IMR-90 (cell line): ENCODE measurements at regions of chr17 and their contacts with region 1.

Region 1: GRCh38 chr17:17280613-17281549 is at the start of gene COPS3:
- DNase-seq: peak; percentile 98
- ATAC-seq: peak; percentile 96
- H3K4me3 ChIP-seq: peak within 1 kb of the TSS; percentile 75
- H3K27ac ChIP-seq: peak within 1 kb of the TSS; percentile 85
- H3K4me1 ChIP-seq: peaks cover 4% of the 10 kb centered on the region
- H3K27me3 ChIP-seq: no peaks in the 10 kb centered on the region
- CTCF ChIP-seq: no peak
- POLR2A ChIP-seq: peak; percentile 82
- RAD21 ChIP-seq: 0 out of 2 replicates have a peak, but pooled peaks have one; percentile 2
- total RNA-seq, gene COPS3: 130 and 144 TPM in 2 replicates

Region 2: GRCh38 chr17:16954521-16954920 is 326.4 kb before region 1 on chr17:
- CTCF ChIA-PET with region 1: no interaction called
- POLR2A ChIA-PET with region 1: no interaction called
- dilution Hi-C with region 1: no loop called
- in situ Hi-C with region 1: no loop called
- intact Hi-C with region 1: no loop called
- DNase-seq: no peak
- ATAC-seq: no peak
- H3K4me3 ChIP-seq: no peak overlapping the region
- H3K27ac ChIP-seq: no peak overlapping the region
- H3K4me1 ChIP-seq: no peaks in the 10 kb centered on the region
- H3K27me3 ChIP-seq: peaks cover 32% of the 10 kb centered on the region
- CTCF ChIP-seq: no peak
- POLR2A ChIP-seq: no peak
- RAD21 ChIP-seq: no peak

Region 3: DNA sequence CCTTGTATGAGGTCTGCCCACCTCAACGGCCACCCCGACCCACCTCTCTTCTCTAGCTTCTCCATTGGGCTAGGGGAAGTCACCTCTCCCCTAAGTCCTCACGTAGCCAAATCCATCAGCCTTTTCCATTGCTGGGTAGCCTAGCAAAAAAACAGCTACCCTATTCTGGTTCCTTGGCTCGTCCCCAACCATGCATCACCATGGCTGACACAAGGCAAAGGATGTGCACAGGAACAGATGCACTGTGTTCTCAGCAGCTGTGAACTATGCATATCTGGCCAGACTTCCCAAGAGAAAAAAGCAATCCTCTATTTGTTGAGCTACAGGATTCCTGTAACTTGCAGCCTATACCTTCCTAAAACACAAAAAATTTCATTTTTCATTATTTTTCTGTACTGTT is 21.9 kb before region 1 on chr17:
- CTCF ChIA-PET with region 1: no interaction called
- POLR2A ChIA-PET with region 1: interaction called, 18 read pairs
- dilution Hi-C with region 1: no loop called
- in situ Hi-C with region 1: no loop called
- intact Hi-C with region 1: no loop called
- DNase-seq: no peak
- ATAC-seq: no peak
- H3K4me3 ChIP-seq: no peak overlapping the region
- H3K27ac ChIP-seq: no peak overlapping the region
- H3K4me1 ChIP-seq: no peaks in the 10 kb centered on the region
- H3K27me3 ChIP-seq: no peaks in the 10 kb centered on the region
- CTCF ChIP-seq: no peak
- POLR2A ChIP-seq: no peak
- RAD21 ChIP-seq: no peak